Activated CD8-positive, alpha-beta memory T cell treated with anti-CD3 and anti-CD28 coated beads, Interleukin-2, amount 10 ng/mL, durations not matched to agents 7 days and 5 days (primary cell): ENCODE measurements at regions of chr1 and their contacts with region 1.

Region 1: GRCh38 chr1:53959664-53960250 is 13.6 kb downstream of the LRRC42 start:
- DNase-seq: no peak
- ATAC-seq: peak; percentile 63
- H3K4me3 Mint-ChIP-seq: no peak overlapping the region
- H3K27ac Mint-ChIP-seq: no peak overlapping the region
- H3K4me1 Mint-ChIP-seq: peaks cover 18% of the 10 kb centered on the region
- H3K27me3 Mint-ChIP-seq: no peaks in the 10 kb centered on the region

Region 2: DNA sequence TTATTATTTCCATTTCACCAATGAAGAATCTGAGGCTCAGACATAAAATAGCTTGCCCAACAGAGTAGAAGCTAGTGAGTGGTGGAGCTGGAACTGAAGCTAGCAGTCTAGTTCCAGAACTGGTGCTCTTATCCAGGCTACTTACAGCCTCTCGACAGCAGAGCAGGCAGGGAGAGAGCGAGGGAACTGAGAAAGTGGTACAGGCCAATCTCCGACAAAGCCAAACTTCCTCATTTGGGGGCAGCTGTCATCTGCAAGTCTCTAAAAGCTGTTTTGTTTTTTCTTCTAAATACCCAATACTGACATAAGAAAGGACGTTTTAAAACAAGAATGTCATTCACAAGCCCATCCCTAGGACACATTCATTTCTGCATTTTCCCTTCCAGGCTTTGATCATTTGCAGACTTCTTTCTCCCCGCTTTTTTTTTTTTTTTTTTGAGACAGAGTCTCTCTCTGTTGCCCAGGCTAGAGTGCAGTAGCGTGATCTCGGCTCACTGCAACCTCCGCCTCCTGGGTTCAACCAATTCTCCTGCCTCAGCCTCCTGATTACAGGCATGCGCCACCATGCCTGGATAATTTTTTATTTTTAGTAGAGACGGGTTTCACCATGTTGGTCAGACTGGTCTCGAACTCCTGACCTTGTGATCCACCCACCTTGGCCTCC is 90.2 kb before region 1 on chr1:
- CTCF ChIA-PET with region 1: interaction called, 21 read pairs
- DNase-seq: no peak
- ATAC-seq: no peak
- H3K4me3 Mint-ChIP-seq: no peak overlapping the region
- H3K27ac Mint-ChIP-seq: no peak overlapping the region
- H3K4me1 Mint-ChIP-seq: no peaks in the 10 kb centered on the region
- H3K27me3 Mint-ChIP-seq: no peaks in the 10 kb centered on the region

Region 3: GRCh38 chr1:53878492-53879105 is 81.2 kb before region 1 on chr1:
- CTCF ChIA-PET with region 1: interaction called, 39 read pairs
- DNase-seq: no peak
- ATAC-seq: no peak
- H3K4me3 Mint-ChIP-seq: no peak overlapping the region
- H3K27ac Mint-ChIP-seq: no peak overlapping the region
- H3K4me1 Mint-ChIP-seq: no peaks in the 10 kb centered on the region
- H3K27me3 Mint-ChIP-seq: no peaks in the 10 kb centered on the region

Region 4: DNA sequence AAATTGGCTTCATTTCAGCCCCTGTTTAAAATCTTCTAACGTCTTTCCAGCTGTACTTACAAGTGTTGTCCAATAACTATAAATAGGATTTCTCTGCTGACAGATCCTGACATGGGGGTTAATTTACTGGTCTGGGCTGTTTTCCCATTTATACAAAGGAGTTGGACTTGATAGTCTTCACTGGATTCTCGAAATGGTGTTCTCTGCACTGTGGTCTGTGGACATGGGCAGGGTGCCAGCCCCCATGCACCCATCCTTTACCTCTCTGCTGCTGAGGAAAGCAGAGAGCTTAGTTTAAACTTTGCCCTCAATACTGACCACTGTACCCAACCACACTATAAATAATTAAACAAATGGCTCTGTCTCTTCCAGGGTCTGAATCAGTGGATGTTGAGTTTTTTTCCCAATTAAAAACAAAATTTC is 60.5 kb before region 1 on chr1:
- CTCF ChIA-PET with region 1: interaction called, 10 read pairs
- DNase-seq: no peak
- ATAC-seq: no peak
- H3K4me3 Mint-ChIP-seq: no peak overlapping the region
- H3K27ac Mint-ChIP-seq: no peak overlapping the region
- H3K4me1 Mint-ChIP-seq: peaks cover 14% of the 10 kb centered on the region
- H3K27me3 Mint-ChIP-seq: peaks cover 6% of the 10 kb centered on the region

Region 5: GRCh38 chr1:53945433-53946251 is 14.1 kb before region 1 on chr1 and contains the start of gene IFT25:
- CTCF ChIA-PET with region 1: interaction called, 22 read pairs
- DNase-seq: peak; percentile 98
- ATAC-seq: peak; percentile 75
- H3K4me3 Mint-ChIP-seq: peak within 1 kb of the TSS; percentile 99
- H3K27ac Mint-ChIP-seq: peak within 1 kb of the TSS; percentile 96
- H3K4me1 Mint-ChIP-seq: peaks cover 53% of the 10 kb centered on the region
- H3K27me3 Mint-ChIP-seq: no peaks in the 10 kb centered on the region
- total RNA-seq, gene IFT25: 69.3 to 82.6 TPM